HCT116 (cell line): ENCODE measurements at regions of chr5 and their contacts with region 1.

Region 1: DNA sequence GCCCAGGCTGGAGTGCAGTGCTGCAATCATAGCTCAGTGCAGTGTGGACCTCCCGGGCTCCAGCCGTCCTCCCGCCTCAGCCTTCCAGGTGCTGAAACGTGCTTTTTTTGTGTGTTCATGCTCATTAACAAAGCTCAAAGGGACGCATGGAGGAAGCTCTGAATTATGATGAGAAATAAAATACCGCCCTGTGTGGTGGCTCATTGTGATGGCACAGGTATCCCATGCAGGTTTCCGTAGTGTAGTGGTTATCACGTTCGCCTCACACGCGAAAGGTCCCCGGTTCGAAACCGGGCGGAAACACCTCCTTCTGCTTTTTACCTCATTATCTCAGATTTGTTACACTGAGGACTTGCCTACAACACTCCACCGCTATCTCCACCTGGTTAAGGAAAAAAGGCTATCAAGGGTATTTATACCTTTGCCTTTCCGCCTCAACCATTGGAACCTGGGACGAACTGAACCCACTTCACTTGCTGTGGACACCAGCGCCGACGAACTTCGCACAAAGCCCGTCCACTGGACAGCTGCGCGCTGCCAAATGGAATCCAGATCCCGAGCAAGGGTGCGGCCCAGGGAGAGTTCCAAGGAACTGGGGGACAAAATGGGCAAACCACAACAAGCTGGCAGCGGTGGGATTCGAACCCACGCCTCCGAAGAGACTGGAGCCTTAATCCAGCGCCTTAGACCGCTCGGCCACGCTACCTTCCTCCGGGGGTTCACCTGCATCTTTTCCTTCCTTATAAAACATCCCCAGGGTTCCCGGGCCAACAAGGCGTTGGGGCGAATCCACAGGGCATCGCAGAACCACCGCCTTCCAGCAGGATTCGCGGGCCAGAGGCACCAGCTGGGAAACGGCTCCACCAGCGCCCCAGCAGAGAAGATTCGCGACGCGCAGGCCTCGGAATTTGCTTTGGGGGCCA is 26.3 kb downstream of the OR2V2 start:
- DNase-seq: peak; percentile 86
- ATAC-seq: peak; percentile 72
- H3K4me3 ChIP-seq: peak overlapping the region; percentile 39 to 58
- H3K27ac ChIP-seq: peak overlapping the region; percentile 71
- H3K4me1 ChIP-seq: peaks cover 13 to 53% of the 10 kb centered on the region in 2 experiments; a peak in 3 of 4 replicates
- H3K27me3 ChIP-seq: no peaks in the 10 kb centered on the region
- CTCF ChIP-seq: peak in 1 of 3 experiments; percentile 3; a peak in 1 of 6 replicates
- POLR2A ChIP-seq: peak; percentile 15
- RAD21 ChIP-seq: no peak

Region 2: GRCh38 chr5:180860887-180861822 is 312.5 kb before region 1 on chr5 and contains the start of gene ZFP62:
- CTCF ChIA-PET with region 1: no interaction called
- POLR2A ChIA-PET with region 1: no interaction called
- RAD21 ChIA-PET with region 1: no interaction called
- intact Hi-C with region 1: loop called (anchors 5 kb)
- DNase-seq: peak; percentile 85
- ATAC-seq: peak; percentile 90
- H3K4me3 ChIP-seq: peak within 1 kb of the TSS; percentile 81 to 90
- H3K27ac ChIP-seq: peak within 1 kb of the TSS; percentile 98
- H3K4me1 ChIP-seq: peaks cover 2 to 14% of the 10 kb centered on the region in 2 experiments; a peak in 2 of 4 replicates
- H3K27me3 ChIP-seq: no peaks in the 10 kb centered on the region
- CTCF ChIP-seq: peak in 1 of 3 experiments; percentile 5; a peak in 1 of 6 replicates
- POLR2A ChIP-seq: peak; percentile 23
- RAD21 ChIP-seq: no peak
- total RNA-seq, gene ZFP62: 30.7 TPM

Region 3: DNA sequence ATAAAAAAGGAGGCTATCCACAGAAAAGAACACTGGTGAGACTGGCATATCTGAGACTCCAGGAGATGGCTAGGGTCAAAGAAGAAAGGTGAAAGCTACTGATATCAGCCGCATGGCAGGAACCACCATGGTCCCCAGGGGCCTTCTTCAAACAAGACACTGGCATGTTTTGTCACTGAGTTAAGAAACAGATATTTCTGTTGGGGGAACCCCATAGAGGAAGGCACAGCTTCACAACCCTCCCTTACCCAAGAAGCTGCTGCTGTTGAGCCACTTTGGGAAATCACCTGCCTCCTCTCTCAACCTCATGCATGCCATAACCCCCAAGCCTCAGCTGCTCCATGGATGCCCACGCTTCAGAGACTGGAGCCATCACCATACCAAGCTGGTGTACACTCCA is 198.3 kb before region 1 on chr5:
- CTCF ChIA-PET with region 1: no interaction called
- POLR2A ChIA-PET with region 1: no interaction called
- RAD21 ChIA-PET with region 1: no interaction called
- intact Hi-C with region 1: no loop called
- DNase-seq: no peak
- ATAC-seq: no peak
- H3K4me3 ChIP-seq: no peak overlapping the region
- H3K27ac ChIP-seq: no peak overlapping the region
- H3K4me1 ChIP-seq: no peaks in the 10 kb centered on the region
- H3K27me3 ChIP-seq: no peaks in the 10 kb centered on the region
- CTCF ChIP-seq: no peak
- POLR2A ChIP-seq: no peak
- RAD21 ChIP-seq: no peak

Region 4: DNA sequence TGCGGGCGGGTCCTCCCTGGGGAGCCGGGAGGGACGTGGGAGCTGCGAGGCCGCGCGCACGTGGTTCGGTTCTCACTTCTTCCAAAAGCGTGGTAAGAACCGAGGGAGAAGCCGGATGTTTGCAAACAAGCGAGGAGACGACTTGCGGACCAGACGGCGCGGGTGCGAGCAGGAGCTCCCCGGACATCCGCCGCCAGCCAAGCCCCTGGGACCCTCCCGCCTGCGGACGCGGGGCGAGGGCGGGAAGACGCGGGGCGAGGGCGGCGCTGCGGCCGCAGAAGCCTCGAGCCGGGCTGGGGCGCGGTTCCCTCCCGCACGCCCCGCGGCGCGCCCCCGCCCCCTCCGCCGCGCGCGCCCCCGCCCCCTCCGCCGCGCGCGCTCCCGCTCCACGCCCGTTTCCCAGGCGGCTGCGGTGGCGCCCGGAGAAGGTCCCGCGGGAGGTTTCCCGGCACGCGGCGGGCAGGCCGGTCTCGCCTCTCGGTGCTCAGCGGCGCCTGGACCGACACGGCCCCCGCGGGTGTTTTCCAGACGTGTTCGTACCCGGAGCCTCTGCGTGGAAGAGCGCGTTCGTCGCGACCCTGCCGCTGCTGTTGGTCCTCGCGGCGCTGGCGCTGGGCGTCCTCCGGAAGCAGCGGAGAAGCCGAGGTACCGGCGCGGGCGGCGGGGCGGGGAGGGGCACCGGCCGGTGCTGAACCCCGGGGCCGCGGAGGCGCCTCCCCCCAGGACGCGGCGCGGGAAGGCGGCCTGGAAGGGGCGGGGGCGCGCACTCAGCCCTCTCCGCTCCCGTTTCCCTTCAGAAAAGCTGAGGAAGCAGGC is 120.8 kb before region 1 on chr5:
- CTCF ChIA-PET with region 1: no interaction called
- POLR2A ChIA-PET with region 1: no interaction called
- RAD21 ChIA-PET with region 1: no interaction called
- intact Hi-C with region 1: no loop called
- DNase-seq: no peak
- ATAC-seq: peak; percentile 71
- H3K4me3 ChIP-seq: peak overlapping the region; percentile 49 to 61
- H3K27ac ChIP-seq: no peak overlapping the region; the same call in 1 of the 2 replicates
- H3K4me1 ChIP-seq: peaks cover 3 to 17% of the 10 kb centered on the region in 2 experiments; a peak in 3 of 4 replicates
- H3K27me3 ChIP-seq: no peaks in the 10 kb centered on the region
- CTCF ChIP-seq: no peak
- POLR2A ChIP-seq: no peak
- RAD21 ChIP-seq: no peak

Region 5: DNA sequence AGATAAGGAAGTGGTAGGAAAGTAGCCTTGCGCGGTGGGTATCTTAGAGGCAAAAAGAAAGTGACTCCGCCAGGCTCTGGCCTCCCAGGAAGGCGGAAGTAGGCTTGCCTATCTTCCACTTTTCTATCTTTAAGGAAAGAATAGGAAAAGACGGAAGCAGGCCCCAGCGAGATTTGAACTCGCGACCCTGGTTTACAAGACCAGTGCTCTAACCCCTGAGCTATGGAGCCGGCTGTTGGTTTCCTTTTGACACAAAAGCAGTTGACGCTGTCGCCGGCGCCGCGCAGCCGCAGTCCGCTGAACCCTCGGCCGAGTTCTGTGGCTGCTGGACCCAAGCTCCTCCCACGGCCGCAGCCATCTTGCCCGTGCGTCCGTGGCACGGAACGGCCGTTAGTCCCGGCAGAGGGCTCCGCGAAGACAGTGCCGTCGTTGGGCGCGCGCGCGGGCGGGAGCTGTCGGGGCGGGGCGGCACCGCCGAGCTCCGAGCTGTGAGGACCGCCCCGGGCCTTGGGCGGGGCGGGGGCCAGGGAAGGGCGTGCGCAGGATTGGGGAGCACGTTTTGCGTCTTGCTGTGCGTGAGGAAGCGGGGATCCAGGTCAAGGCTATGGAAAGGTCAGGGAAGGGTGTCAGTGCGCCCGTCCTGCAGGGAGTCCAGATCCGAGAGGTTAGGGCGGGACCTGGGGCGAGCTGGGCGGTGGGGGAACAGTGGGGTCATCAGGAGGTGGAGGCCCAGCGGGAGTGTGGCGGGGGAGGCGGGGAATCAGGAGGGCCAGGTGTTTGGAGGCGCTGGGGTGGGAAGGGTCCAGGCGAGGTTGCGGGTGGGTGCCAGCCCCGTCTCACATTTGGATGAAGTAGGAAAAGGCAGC is 18.1 kb after region 1 on chr5:
- CTCF ChIA-PET with region 1: interaction called, 6 read pairs
- POLR2A ChIA-PET with region 1: interaction called, 7 read pairs
- RAD21 ChIA-PET with region 1: no interaction called
- intact Hi-C with region 1: loop called (anchors 2 kb)
- DNase-seq: peak; percentile 89
- ATAC-seq: peak; percentile 68
- H3K4me3 ChIP-seq: peak overlapping the region; percentile 74 to 92
- H3K27ac ChIP-seq: peak overlapping the region; percentile 76
- H3K4me1 ChIP-seq: peaks cover 18 to 48% of the 10 kb centered on the region in 2 experiments
- H3K27me3 ChIP-seq: no peaks in the 10 kb centered on the region
- CTCF ChIP-seq: no peak
- POLR2A ChIP-seq: no peak
- RAD21 ChIP-seq: no peak